Prostate gland (tissue), 2 donors: ENCODE measurements at regions of chr7 and their contacts with region 1.

Region 1: DNA sequence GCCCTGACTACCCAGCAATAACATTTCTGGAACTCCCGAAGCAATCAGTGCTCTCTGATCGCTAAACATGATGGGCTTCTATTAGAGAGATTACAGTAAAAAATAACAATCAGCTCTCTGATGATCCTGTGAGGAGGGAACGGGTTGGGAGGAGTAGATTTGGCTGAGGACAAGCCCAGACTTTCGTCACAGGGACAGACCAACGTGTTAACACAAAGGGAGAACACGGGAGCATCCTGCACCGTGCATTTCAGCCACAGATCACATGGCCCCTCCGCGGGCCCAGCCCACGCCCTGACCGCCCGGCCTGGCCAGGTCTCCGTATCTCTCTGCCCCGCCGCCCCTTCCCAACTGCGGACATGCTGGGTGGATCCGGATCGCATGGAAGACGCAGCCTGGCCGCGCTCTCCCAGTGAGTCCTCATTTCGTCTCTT is 95.0 kb upstream of the AGBL3 start:
- DNase-seq: peak; percentile 78
- H3K4me3 ChIP-seq: peak overlapping the region; percentile 32 to 36
- H3K27ac ChIP-seq: peak overlapping the region; percentile 71 to 72
- H3K4me1 ChIP-seq: no peaks in the 10 kb centered on the region
- H3K27me3 ChIP-seq: no peaks in the 10 kb centered on the region
- CTCF ChIP-seq: no peak
- POLR2A ChIP-seq: no peak

Region 2: GRCh38 chr7:134943764-134944400 is 52.6 kb after region 1 on chr7:
- intact Hi-C with region 1: no loop called
- DNase-seq: no peak
- H3K4me3 ChIP-seq: no peak overlapping the region
- H3K27ac ChIP-seq: no peak overlapping the region
- H3K4me1 ChIP-seq: no peaks in the 10 kb centered on the region
- H3K27me3 ChIP-seq: no peaks in the 10 kb centered on the region
- CTCF ChIP-seq: peak in 2 of 4 experiments; percentile 24 to 32
- POLR2A ChIP-seq: no peak

Region 3: DNA sequence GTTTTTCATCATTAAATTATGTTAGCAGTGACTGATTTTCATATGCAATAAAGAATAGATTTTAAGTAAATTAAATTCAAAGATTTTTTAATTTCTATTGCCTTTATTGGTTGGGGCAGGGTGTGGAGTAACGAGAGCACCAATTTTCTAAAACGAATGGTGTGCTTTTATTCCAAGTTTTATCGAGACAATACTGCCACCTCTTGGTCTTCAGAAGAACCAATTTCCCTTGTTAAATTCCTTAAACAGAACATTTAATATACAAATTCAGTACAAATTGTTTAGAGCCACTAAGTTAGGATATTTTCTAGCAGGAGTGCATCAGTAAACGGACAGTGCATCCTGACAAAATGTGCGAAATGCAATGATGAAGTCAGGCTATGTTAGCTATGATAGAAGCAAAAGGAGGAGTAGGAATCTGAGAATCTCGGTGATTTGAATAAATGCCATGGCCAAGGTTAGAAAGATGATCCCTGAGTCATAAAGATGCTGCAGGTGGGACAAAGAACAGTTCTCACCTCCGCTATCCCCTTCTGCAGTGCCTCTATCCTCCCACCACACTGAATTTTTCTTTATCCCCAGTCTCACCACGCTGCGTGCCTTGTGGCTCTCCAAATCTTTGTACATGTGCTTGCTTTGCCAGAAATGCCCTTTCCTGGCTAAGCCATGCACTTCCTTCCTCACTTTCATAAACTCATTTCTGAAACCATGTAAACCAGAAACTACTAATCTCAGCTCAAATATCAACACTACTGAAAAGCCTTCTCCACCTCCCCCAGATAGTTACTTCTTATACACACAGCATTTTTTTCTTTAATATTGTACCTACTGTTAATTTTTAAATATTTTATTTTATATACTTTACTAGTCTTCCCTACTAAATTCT is 63.2 kb after region 1 on chr7:
- intact Hi-C with region 1: loop called (anchors 5 kb)
- DNase-seq: no peak
- H3K4me3 ChIP-seq: no peak overlapping the region
- H3K27ac ChIP-seq: no peak overlapping the region
- H3K4me1 ChIP-seq: no peaks in the 10 kb centered on the region
- H3K27me3 ChIP-seq: no peaks in the 10 kb centered on the region
- CTCF ChIP-seq: peak; percentile 13 to 74 (median 54)
- POLR2A ChIP-seq: no peak